Activated CD4-positive, alpha-beta T cell treated with anti-CD3 and anti-CD28 coated beads, Interleukin-2, amount 10 ng/mL, durations not matched to agents 7 days and 5 days (primary cell): ENCODE measurements at regions of chr1 and their contacts with region 1.

Region 1: DNA sequence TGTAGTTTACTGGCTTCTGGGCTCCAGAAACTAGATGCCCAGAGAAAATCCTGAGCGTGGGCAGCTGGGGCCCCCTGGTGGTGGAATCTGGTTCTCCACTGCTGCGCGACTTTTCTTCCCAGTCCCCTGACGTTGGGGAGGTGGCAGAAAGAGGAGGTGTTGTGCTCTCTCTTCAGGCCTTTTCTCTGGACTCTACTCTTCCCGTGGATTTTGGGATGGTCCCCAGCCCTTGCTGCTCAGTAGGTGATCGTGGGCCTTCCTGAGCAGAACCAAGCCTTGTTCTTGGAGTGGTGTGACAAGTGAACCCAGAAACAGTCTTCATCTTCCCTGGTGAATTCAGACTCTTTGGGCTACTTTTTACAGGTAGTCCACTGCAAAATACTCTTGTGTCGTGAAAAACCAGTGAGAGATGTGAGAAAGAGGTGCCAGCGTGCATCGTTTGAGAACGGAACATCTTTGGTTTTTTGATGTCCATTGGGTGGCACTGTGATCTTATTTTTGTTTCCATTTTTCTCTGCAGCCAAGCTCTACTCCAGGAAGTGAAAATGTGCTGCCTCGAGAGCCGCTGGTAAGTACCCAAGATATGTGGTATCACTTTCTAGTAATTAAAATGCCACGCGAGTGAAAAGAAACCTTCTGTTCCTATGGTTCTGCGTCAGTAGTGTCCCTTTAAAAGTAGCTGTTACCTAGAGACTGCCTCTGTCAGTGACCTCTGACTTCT is 20.2 kb downstream of the PEX14 start:
- DNase-seq: peak; percentile 84
- H3K4me3 Mint-ChIP-seq: peak overlapping the region; percentile 79
- H3K27ac Mint-ChIP-seq: peak overlapping the region; percentile 97
- H3K4me1 Mint-ChIP-seq: peaks cover 56% of the 10 kb centered on the region
- H3K27me3 Mint-ChIP-seq: no peaks in the 10 kb centered on the region

Region 2: GRCh38 chr1:10430216-10431069 is 64.5 kb before region 1 on chr1 and contains the start of gene CENPS:
- CTCF ChIA-PET with region 1: interaction called, 61 read pairs
- POLR2A ChIA-PET with region 1: no interaction called
- DNase-seq: peak; percentile 81
- H3K4me3 Mint-ChIP-seq: peak within 1 kb of the TSS; percentile 82
- H3K27ac Mint-ChIP-seq: peak within 1 kb of the TSS; percentile 91
- H3K4me1 Mint-ChIP-seq: peaks cover 31% of the 10 kb centered on the region
- H3K27me3 Mint-ChIP-seq: no peaks in the 10 kb centered on the region
- total RNA-seq, gene CENPS: 16.1 to 20.7 TPM

Region 3: DNA sequence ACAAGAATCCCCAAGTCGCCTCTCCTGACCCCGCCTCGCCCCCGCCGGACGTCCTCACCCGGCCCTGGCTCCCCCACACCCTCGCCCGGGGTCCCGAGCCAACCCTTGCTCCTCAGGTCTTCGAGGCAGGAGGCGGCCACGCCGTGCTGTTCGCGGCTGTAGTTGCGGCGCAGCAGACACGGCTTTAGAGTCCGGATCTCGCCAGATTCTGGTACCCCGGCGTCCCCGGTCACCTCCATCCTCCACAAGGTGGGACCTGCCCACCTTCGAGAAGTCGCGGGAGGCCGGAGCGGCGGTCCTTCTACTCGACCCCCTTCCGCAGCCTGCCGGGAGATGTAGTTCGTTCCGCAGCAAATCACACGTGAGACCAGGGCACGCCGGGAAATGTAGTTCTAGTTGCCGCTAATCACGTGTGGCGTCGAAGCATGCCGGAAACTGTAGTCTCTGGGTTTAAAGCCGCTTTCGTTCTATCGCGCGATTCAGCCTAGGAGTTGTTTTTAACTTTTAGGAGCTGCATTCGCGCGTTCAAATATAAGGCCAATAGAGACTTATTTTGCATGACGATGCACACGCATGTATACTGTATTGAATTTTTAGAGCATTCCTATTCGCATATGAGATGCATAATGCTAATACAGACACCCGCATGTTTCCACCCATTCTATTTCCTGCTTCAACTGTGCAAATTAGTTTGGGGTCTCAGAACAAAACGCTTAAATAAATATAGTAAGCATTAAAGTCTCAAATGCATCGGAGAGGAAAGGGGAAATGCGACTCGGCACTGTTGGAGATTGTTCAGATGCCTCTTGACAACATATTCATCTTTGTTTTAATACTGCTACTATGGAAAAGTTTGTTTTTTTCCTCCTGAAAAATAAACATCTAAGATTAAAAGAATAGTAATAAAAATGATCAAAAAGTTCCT is 22.4 kb before region 1 on chr1 and contains the start of gene DFFA:
- CTCF ChIA-PET with region 1: interaction called, 10 read pairs
- POLR2A ChIA-PET with region 1: no interaction called
- DNase-seq: peak; percentile 96
- H3K4me3 Mint-ChIP-seq: peak within 1 kb of the TSS; percentile 94
- H3K27ac Mint-ChIP-seq: peak within 1 kb of the TSS; percentile 94
- H3K4me1 Mint-ChIP-seq: peaks cover 46% of the 10 kb centered on the region
- H3K27me3 Mint-ChIP-seq: no peaks in the 10 kb centered on the region
- total RNA-seq, gene DFFA: 28.1 to 28.6 TPM

Region 4: DNA sequence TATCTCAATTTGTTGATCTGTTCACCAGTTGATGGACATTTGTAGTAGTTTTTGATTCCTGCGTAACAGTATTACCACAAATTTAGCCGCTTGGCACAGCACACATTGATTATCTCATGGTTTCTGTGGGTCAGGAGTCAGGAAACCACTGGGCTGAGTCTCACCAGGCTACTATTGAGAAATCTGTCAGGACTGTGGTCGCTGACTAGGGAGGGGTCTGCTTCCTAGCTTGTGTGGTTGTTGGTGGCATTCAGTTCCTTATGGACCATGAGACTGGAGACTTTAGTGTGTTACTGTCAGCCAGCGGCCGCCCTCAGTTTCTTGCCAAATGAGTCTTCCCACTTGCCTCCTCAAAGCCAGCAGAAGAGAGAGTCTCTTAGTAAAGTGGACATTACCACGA is 10.4 kb before region 1 on chr1:
- CTCF ChIA-PET with region 1: interaction called, 25 read pairs
- POLR2A ChIA-PET with region 1: no interaction called
- DNase-seq: no peak
- H3K4me3 Mint-ChIP-seq: no peak overlapping the region
- H3K27ac Mint-ChIP-seq: no peak overlapping the region
- H3K4me1 Mint-ChIP-seq: peaks cover 5% of the 10 kb centered on the region
- H3K27me3 Mint-ChIP-seq: no peaks in the 10 kb centered on the region

Region 5: DNA sequence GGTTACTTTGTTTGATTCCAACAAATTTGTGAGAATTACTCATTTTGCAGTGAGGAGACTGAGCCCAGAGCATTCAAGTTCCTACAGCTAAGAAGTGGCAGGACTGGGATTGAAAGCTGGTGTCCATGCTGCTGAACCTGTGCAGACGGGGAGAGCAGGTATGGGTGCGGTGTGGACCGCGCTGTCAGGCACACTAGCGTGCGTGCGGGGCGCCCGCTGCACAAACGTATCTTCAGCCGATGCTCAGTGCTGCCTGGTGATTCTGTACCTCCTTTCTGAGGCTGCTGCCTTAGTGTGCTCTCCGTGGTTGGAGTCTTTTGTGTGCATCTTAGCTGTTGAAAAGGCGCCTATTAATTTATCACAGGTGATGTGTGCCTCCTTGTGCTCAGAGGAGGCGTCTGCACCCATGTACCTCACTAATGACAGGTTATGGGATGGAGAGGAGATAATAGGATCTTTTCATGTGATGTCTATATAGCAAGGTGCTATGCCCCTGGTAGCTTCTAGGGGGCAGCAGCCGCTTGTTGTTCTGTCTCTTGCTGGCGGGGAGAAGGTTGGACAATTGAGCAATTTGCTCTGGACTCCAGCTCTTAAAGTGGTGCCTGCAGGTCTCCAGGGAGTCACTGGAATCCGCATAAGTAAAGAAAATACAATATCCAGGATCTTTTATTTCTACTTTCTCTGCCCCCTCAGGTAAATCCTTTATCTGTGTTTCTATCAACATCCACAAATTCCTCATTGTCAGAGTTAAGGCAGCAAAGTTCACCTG is 12.4 kb after region 1 on chr1:
- CTCF ChIA-PET with region 1: interaction called, 63 read pairs
- POLR2A ChIA-PET with region 1: interaction called, 8 read pairs
- DNase-seq: peak; percentile 69
- H3K4me3 Mint-ChIP-seq: no peak overlapping the region
- H3K27ac Mint-ChIP-seq: peak overlapping the region; percentile 70
- H3K4me1 Mint-ChIP-seq: peaks cover 58% of the 10 kb centered on the region
- H3K27me3 Mint-ChIP-seq: no peaks in the 10 kb centered on the region

Region 6: DNA sequence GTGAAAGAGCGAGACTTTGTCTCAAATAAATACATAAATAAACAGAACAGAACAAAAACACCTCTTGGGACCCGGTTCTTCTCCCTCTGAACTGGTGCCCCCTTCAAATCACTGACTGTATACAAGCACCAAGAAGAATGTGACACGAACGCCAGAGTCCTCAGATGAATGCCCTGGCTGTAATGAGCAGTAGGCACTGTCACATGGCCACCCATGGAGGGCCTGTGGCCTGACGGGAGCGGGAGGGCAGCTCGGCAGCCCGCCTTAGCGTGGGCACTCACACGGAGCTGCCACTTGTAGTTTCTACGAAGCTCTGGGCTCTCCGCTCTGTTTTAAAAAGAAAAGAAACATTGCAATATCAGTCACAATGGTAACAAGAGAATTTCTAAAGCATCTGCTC is 125.9 kb after region 1 on chr1:
- CTCF ChIA-PET with region 1: no interaction called
- POLR2A ChIA-PET with region 1: no interaction called
- DNase-seq: no peak
- H3K4me3 Mint-ChIP-seq: no peak overlapping the region
- H3K27ac Mint-ChIP-seq: no peak overlapping the region
- H3K4me1 Mint-ChIP-seq: no peaks in the 10 kb centered on the region
- H3K27me3 Mint-ChIP-seq: no peaks in the 10 kb centered on the region